ENCODE measurements at regions of chr22 and their contacts with region 1.

Region 1: GRCh38 chr22:17120281-17120680 is 879 bp downstream of the TMEM121B start:
- DNase-seq: peak; percentile 36 to 74 (median 53)
- ATAC-seq: peak; percentile 79
- H3K4me3 ChIP-seq: no peak overlapping the region
- H3K4me3 Mint-ChIP-seq: peak overlapping the region in 7 of 10 donors; percentile 21 to 78 (median 58)
- H3K27ac ChIP-seq: no peak overlapping the region
- H3K27ac Mint-ChIP-seq: no peak overlapping the region
- H3K4me1 ChIP-seq: peaks cover 46 to 54% of the 10 kb centered on the region in 2 donors
- H3K4me1 Mint-ChIP-seq: peaks cover 41 to 50% (median 47%) of the 10 kb centered on the region in 7 donors
- H3K27me3 ChIP-seq: peaks cover 0 to 10% of the 10 kb centered on the region in 2 donors
- H3K27me3 Mint-ChIP-seq: peaks cover 6 to 43% (median 12%) of the 10 kb centered on the region in 5 donors

Region 2: DNA sequence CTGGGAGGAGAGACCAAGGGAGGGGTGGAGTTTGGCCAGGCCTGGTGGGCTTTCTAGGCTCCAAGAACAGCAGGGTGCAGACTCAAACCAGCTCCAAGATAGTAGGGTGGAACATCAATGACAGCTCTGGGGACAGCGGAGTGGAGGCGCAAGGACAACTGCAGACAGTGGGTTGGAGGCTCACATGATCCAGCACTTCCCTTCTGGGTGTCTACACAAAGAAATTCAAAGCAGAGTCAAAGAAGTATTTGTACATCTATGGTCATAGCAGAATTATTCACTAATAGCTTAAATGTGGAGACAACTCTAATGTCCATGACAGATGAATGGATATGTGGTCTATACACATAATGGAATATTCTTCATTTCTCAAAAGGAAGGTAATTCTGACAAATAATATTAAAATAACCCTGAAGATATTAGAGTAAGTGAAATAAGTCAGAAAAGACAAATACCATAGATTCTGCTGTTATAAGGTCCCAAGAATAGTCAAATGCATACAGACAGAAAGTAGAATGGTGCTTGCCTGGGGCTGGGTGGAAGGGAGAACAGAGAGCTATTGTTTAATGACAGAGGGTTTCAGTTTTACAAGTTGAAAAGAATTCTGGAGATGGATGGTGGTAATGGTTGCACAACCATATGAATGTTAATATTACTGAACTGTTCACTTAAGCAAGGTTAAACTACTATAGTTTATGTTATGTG is 106.7 kb before region 1 on chr22:
- CTCF ChIA-PET with region 1: no interaction called
- POLR2A ChIA-PET with region 1: no interaction called
- intact Hi-C with region 1: no loop called
- DNase-seq: no peak
- ATAC-seq: no peak
- H3K4me3 ChIP-seq: no peak overlapping the region
- H3K4me3 Mint-ChIP-seq: no peak overlapping the region
- H3K27ac ChIP-seq: no peak overlapping the region
- H3K27ac Mint-ChIP-seq: no peak overlapping the region
- H3K4me1 ChIP-seq: no peaks in the 10 kb centered on the region
- H3K4me1 Mint-ChIP-seq: no peaks in the 10 kb centered on the region
- H3K27me3 ChIP-seq: no peaks in the 10 kb centered on the region
- H3K27me3 Mint-ChIP-seq: peaks cover 14 to 61% (median 44%) of the 10 kb centered on the region in 5 donors

Region 3: GRCh38 chr22:17106785-17107546 is 13.3 kb before region 1 on chr22:
- CTCF ChIA-PET with region 1: interaction called, 3 read pairs
- POLR2A ChIA-PET with region 1: interaction called, 4 read pairs
- intact Hi-C with region 1: loop called (anchors 1 kb)
- DNase-seq: peak in 5 of 9 donors; percentile 22 to 38 (median 24)
- ATAC-seq: peak; percentile 77
- H3K4me3 ChIP-seq: peak overlapping the region; percentile 18
- H3K4me3 Mint-ChIP-seq: peak overlapping the region; percentile 70 to 87 (median 82)
- H3K27ac ChIP-seq: peak overlapping the region; percentile 66
- H3K27ac Mint-ChIP-seq: peak overlapping the region; percentile 82 to 96 (median 90)
- H3K4me1 ChIP-seq: peaks cover 4 to 46% of the 10 kb centered on the region in 2 donors
- H3K4me1 Mint-ChIP-seq: peaks cover 37 to 77% (median 60%) of the 10 kb centered on the region in 7 donors
- H3K27me3 ChIP-seq: no peaks in the 10 kb centered on the region
- H3K27me3 Mint-ChIP-seq: no peaks in the 10 kb centered on the region

Region 4: GRCh38 chr22:17131686-17132085 is 11.4 kb after region 1 on chr22:
- CTCF ChIA-PET with region 1: no interaction called
- POLR2A ChIA-PET with region 1: no interaction called
- intact Hi-C with region 1: loop called in 1 of 2 experiments (anchors 2 kb)
- DNase-seq: no peak
- ATAC-seq: no peak
- H3K4me3 ChIP-seq: no peak overlapping the region
- H3K4me3 Mint-ChIP-seq: no peak overlapping the region
- H3K27ac ChIP-seq: no peak overlapping the region
- H3K27ac Mint-ChIP-seq: no peak overlapping the region
- H3K4me1 ChIP-seq: no peaks in the 10 kb centered on the region
- H3K4me1 Mint-ChIP-seq: peaks cover 0 to 5% (median 0%) of the 10 kb centered on the region in 7 donors
- H3K27me3 ChIP-seq: no peaks in the 10 kb centered on the region
- H3K27me3 Mint-ChIP-seq: peaks cover 0 to 18% (median 0%) of the 10 kb centered on the region in 5 donors

Region 5: GRCh38 chr22:17158568-17159503 is 38.6 kb after region 1 on chr22 and contains the start of gene HDHD5:
- CTCF ChIA-PET with region 1: no interaction called
- POLR2A ChIA-PET with region 1: interaction called, 3 read pairs
- intact Hi-C with region 1: loop called (anchors 2 kb)
- DNase-seq: peak; percentile 71 to 87 (median 84)
- ATAC-seq: peak; percentile 96
- H3K4me3 ChIP-seq: peak within 1 kb of the TSS; percentile 79
- H3K4me3 Mint-ChIP-seq: peak within 1 kb of the TSS; percentile 80 to 91 (median 88)
- H3K27ac ChIP-seq: peak within 1 kb of the TSS; percentile 79
- H3K27ac Mint-ChIP-seq: peak within 1 kb of the TSS in 8 of 9 donors; percentile 36 to 88 (median 76)
- H3K4me1 ChIP-seq: peaks cover 18 to 26% of the 10 kb centered on the region in 2 donors
- H3K4me1 Mint-ChIP-seq: peaks cover 18 to 48% (median 36%) of the 10 kb centered on the region in 7 donors
- H3K27me3 ChIP-seq: no peaks in the 10 kb centered on the region
- H3K27me3 Mint-ChIP-seq: no peaks in the 10 kb centered on the region
- total RNA-seq, gene HDHD5: 18.8 to 50.9 (median 26.2) TPM

Measured in naive thymus-derived CD4-positive, alpha-beta T cell (primary cell).